Naive thymus-derived CD4-positive, alpha-beta T cell (primary cell): ENCODE measurements at regions of chr5 and their contacts with region 1.

Region 1: DNA sequence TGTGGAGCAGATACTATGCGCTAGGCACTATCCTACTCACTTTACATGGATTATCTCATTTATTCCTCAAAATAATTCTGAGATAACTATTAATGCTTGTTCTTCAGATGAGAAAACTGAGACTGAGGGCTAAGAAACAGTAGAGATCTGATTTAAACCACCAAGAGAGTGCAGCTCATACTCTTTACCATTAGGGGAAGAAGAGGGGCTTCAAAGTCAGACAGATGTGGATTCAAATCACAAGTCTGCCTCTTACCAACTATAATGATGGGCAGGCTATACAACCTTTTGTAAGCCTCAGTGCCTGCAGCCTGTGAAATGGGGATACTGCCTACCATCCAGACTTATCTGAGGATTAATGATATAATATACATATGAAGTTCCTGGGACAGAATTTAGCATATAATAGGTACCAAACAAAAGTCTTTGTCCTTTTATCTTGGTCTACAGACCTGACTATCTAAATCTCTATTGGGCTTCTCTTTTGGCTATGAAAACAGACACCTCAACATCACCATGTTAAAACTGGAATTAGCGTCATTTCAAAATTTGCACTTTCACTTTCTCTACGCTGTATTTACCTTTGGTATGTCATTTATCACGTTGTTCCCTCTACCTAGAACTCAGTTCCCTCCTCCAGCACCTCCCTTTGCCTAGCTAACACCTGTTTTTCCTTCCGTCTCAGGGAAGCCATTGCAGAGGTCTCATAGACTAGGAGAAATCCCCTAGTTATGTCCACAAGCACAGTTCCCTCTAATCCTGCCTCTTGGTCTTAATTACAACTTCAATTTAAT is 13.8 kb upstream of the TMEM267 start:
- DNase-seq: no peak
- ATAC-seq: no peak
- H3K4me3 ChIP-seq: no peak overlapping the region
- H3K4me3 Mint-ChIP-seq: no peak overlapping the region
- H3K27ac ChIP-seq: no peak overlapping the region
- H3K27ac Mint-ChIP-seq: no peak overlapping the region
- H3K4me1 ChIP-seq: no peaks in the 10 kb centered on the region
- H3K4me1 Mint-ChIP-seq: no peaks in the 10 kb centered on the region
- H3K27me3 ChIP-seq: no peaks in the 10 kb centered on the region
- H3K27me3 Mint-ChIP-seq: no peaks in the 10 kb centered on the region

Region 2: DNA sequence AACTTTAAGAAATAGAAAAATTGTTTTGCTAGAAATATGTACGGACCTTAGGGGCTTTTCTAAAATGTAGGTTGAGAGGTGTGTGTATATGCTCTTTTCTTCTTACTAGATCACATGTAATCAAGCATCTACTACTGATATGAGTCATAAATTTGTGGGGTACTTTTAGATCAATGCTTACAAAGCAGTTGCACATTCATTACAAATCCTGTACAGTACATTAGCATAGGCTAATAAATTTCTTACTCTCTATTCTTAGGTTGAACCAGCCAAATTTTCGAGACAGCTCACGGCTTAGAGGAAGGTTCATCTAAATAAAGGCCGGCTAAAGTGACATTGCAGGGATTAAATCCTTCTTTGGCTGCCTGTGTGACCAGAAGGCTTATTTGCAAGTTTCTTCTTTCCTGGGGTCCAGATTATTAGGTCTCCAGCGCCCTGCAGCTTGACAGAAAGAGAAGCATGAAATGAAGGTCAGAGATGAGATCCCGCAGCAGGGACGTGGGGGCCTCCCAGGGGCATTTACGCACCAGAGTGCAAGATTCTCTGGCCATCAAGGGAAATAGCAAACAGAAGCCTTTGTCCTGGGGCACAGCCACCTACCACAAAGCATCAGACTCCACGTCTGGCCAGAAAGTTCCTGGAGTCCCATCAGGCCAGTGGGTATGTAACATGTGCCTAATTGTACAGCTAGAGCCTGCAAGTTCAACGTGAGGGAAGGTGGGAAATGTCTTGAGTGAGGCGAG is 252.5 kb before region 1 on chr5:
- CTCF ChIA-PET with region 1: no interaction called
- POLR2A ChIA-PET with region 1: no interaction called
- intact Hi-C with region 1: no loop called
- DNase-seq: no peak
- ATAC-seq: no peak
- H3K4me3 ChIP-seq: no peak overlapping the region
- H3K4me3 Mint-ChIP-seq: no peak overlapping the region
- H3K27ac ChIP-seq: no peak overlapping the region
- H3K27ac Mint-ChIP-seq: no peak overlapping the region
- H3K4me1 ChIP-seq: no peaks in the 10 kb centered on the region
- H3K4me1 Mint-ChIP-seq: no peaks in the 10 kb centered on the region
- H3K27me3 ChIP-seq: no peaks in the 10 kb centered on the region
- H3K27me3 Mint-ChIP-seq: peaks cover 12 to 29% (median 16%) of the 10 kb centered on the region in 5 donors

Region 3: GRCh38 chr5:43432473-43433365 is 64.8 kb before region 1 on chr5:
- CTCF ChIA-PET with region 1: no interaction called
- POLR2A ChIA-PET with region 1: no interaction called
- intact Hi-C with region 1: no loop called
- DNase-seq: no peak
- ATAC-seq: no peak
- H3K4me3 ChIP-seq: no peak overlapping the region
- H3K4me3 Mint-ChIP-seq: no peak overlapping the region
- H3K27ac ChIP-seq: no peak overlapping the region
- H3K27ac Mint-ChIP-seq: no peak overlapping the region
- H3K4me1 ChIP-seq: no peaks in the 10 kb centered on the region
- H3K4me1 Mint-ChIP-seq: peaks cover 0 to 1% (median 0%) of the 10 kb centered on the region in 7 donors
- H3K27me3 ChIP-seq: no peaks in the 10 kb centered on the region
- H3K27me3 Mint-ChIP-seq: no peaks in the 10 kb centered on the region

Region 4: DNA sequence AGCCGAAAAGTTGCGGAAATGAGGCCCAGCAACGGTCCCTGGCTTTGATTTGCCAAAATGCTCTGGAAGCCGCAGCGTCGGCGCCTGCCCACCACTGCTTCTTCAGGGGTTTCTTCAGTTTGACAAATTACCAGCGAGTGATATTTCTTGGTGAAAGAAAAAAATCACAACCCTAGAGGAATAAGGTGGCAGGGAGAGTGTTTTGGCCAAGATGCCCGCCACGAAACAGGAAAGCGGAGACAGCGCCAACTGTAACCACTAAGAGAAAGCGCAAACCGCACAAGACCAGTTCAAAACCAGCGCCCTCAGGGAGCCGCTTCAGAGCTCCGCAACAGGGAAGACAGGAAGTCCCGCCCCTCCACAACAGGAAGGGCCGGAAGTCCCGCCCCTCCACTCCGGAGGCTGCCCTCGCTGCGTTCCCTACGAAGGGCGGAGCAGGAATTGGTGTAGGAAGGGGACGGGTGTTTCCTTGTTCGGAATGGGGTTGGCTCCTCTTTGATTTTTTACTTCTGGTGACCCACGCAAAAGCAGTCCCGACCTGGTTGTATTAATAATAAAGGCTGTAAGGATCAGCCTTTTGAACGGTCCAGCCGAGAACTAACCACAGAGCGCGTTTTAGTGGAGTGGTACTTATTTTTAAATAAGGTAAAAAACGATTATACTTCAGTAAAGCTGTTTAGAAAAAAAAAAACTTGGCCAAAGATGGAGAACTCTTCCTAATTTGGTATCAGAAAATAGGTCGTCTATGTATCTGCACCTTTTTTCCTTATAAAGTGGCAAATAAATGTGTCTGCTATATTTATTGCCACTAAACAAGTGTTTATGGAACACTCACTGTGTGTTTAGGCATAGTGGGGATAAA is 17.5 kb after region 1 on chr5 and contains the start of gene C5orf34:
- CTCF ChIA-PET with region 1: no interaction called
- POLR2A ChIA-PET with region 1: no interaction called
- intact Hi-C with region 1: loop called in 1 of 2 experiments (anchors 2 kb)
- DNase-seq: peak; percentile 84 to 94 (median 89)
- ATAC-seq: peak; percentile 97
- H3K4me3 ChIP-seq: peak within 1 kb of the TSS; percentile 84
- H3K4me3 Mint-ChIP-seq: peak within 1 kb of the TSS; percentile 90 to 97 (median 94)
- H3K27ac ChIP-seq: peak within 1 kb of the TSS; percentile 81
- H3K27ac Mint-ChIP-seq: peak within 1 kb of the TSS; percentile 90 to 98 (median 95)
- H3K4me1 ChIP-seq: peaks cover 8 to 14% of the 10 kb centered on the region in 2 donors
- H3K4me1 Mint-ChIP-seq: peaks cover 17 to 42% (median 36%) of the 10 kb centered on the region in 7 donors
- H3K27me3 ChIP-seq: no peaks in the 10 kb centered on the region
- H3K27me3 Mint-ChIP-seq: no peaks in the 10 kb centered on the region
- total RNA-seq, gene C5orf34: 1.1 to 5.2 (median 3.3) TPM